ENCODE measurements at regions of chr10 and their contacts with region 1.

Region 1: DNA sequence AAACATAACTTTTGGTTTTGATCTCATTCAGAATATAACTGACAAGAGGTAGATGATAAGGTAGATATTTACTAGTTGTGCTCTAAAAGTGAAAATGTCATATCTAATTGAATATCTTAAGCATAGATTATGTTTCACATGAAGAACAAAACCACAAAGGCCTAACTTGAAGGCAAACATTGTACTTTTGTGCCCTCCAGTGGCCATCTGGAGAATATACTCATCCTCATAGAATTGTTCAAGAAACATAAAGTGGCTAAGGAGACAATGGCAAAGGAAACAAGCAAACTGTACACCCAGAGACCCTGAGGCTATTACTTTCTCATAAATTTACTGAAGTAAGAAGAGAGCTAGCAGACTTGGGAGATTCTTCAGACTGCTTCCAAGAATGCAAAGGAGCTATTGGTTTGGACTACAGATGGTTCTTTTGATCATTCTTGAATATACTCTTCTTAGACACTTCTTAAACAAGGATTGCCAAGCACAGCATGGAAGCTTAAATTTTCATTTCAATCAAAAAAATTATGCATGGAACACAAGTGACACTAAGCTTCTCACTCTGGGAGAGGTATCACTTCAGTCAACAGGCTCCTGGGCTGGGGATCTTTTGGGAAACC is 98.2 kb upstream of the DKK1 start:
- DNase-seq: peak; percentile 96
- ATAC-seq: peak; percentile 58
- H3K4me3 ChIP-seq: no peak overlapping the region
- H3K27ac ChIP-seq: peak overlapping the region; percentile 65
- H3K4me1 ChIP-seq: peaks cover 24% of the 10 kb centered on the region
- H3K27me3 ChIP-seq: no peaks in the 10 kb centered on the region
- CTCF ChIP-seq: peak; percentile 99

Region 2: GRCh38 chr10:51010977-51011376 is 1204.9 kb before region 1 on chr10:
- CTCF ChIA-PET with region 1: no interaction called
- POLR2A ChIA-PET with region 1: no interaction called
- intact Hi-C with region 1: loop called (anchors 1 kb)
- DNase-seq: peak; percentile 93
- ATAC-seq: peak; percentile 60
- H3K4me3 ChIP-seq: no peak overlapping the region
- H3K27ac ChIP-seq: no peak overlapping the region
- H3K4me1 ChIP-seq: peaks cover 7% of the 10 kb centered on the region
- H3K27me3 ChIP-seq: peaks cover 15% of the 10 kb centered on the region
- CTCF ChIP-seq: peak; percentile 100

Region 3: DNA sequence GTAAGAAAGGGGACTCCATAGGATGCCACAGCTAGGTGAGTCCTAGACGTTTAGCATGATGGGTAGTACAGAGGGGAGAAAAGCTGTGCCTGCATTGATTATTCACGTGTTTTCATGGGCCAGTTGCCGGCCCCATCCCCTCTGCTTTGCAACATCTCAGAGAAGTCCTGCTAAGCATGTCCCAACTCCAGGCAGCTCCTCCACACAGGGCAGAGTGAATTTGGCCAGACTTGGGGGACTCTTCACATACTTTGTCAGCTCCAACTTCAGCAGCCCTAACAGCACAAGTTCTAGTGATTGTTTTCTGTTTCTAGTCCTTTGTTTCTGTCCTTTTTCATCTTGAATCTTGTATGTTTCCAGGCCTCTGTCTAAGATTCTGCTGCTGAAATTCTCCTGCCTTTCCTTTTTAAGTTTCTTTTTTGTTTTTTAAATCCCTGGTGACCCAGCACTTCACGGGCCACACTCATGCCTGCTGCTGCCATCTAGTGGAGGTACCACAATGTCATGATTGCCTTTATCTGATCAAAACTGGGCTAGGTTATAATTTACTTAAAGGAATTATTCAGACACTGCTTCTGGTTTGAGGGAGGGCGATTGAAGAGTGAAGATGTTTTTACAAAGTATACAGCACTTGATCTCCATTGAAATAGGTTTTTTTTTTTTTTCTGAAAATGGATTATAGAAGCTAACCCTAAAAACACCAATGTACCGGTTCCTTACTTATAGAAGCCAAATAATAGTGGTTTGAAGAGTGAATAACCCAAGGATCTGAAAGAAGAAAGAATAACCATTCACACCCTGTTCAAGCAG is 793.3 kb before region 1 on chr10:
- CTCF ChIA-PET with region 1: no interaction called
- POLR2A ChIA-PET with region 1: no interaction called
- intact Hi-C with region 1: loop called (anchors 2 kb)
- DNase-seq: peak; percentile 95
- ATAC-seq: peak; percentile 95
- H3K4me3 ChIP-seq: no peak overlapping the region
- H3K27ac ChIP-seq: no peak overlapping the region
- H3K4me1 ChIP-seq: no peaks in the 10 kb centered on the region; the same call in 1 of the 2 replicates
- H3K27me3 ChIP-seq: no peaks in the 10 kb centered on the region
- CTCF ChIP-seq: peak; percentile 100

Region 4: GRCh38 chr10:51699475-51700227 is 516.2 kb before region 1 on chr10 and contains the start of gene CSTF2T:
- CTCF ChIA-PET with region 1: interaction called, 3 read pairs
- POLR2A ChIA-PET with region 1: no interaction called
- intact Hi-C with region 1: loop called (anchors 10 kb)
- DNase-seq: peak; percentile 99
- ATAC-seq: peak; percentile 91
- H3K4me3 ChIP-seq: peak within 1 kb of the TSS; percentile 74
- H3K27ac ChIP-seq: peak within 1 kb of the TSS; percentile 78
- H3K4me1 ChIP-seq: peaks cover 32% of the 10 kb centered on the region
- H3K27me3 ChIP-seq: no peaks in the 10 kb centered on the region
- CTCF ChIP-seq: no peak
- total RNA-seq, gene CSTF2T: 41.7 and 45.2 TPM in 2 replicates

Region 5: GRCh38 chr10:52004342-52004949 is 211.4 kb before region 1 on chr10:
- CTCF ChIA-PET with region 1: no interaction called
- POLR2A ChIA-PET with region 1: no interaction called
- intact Hi-C with region 1: loop called (anchors 1 kb)
- DNase-seq: peak; percentile 94
- ATAC-seq: peak; percentile 89
- H3K4me3 ChIP-seq: no peak overlapping the region
- H3K27ac ChIP-seq: no peak overlapping the region
- H3K4me1 ChIP-seq: no peaks in the 10 kb centered on the region
- H3K27me3 ChIP-seq: peaks cover 15% of the 10 kb centered on the region; the same call in 1 of the 2 replicates
- CTCF ChIP-seq: peak; percentile 96

Region 6: DNA sequence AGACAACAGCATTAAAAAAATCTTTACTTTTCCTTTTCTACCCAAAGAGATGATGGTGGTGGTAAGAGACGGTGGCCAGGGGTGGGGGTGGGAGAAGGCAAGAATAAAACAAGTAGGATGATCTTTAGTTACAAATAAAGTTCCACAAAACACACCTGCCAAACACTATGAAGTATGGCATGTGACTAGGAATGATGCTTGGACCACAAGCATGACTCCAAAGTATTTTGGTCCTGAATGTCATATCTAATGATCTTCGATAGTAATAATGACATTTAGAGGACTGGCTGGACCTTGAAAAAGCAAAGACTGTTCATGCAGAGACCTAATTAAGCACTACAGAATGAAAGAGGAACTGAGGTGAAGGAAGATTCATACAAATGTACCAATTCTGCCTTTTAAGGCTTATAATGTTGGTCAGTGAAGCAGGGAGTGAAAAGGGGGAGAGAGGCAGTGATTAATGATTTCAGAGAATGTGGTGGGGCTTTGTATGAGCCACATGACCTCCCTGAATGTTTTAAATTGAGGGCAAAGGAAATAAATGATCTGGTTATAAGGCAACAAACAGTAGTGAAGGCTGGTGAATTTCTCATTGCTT is 68.7 kb after region 1 on chr10:
- CTCF ChIA-PET with region 1: no interaction called
- POLR2A ChIA-PET with region 1: no interaction called
- intact Hi-C with region 1: no loop called
- DNase-seq: no peak
- ATAC-seq: no peak
- H3K4me3 ChIP-seq: no peak overlapping the region
- H3K27ac ChIP-seq: no peak overlapping the region
- H3K4me1 ChIP-seq: no peaks in the 10 kb centered on the region
- H3K27me3 ChIP-seq: no peaks in the 10 kb centered on the region
- CTCF ChIP-seq: no peak